Caco-2 (cell line): ENCODE measurements at regions of chr5 and their contacts with region 1.

Region 1: DNA sequence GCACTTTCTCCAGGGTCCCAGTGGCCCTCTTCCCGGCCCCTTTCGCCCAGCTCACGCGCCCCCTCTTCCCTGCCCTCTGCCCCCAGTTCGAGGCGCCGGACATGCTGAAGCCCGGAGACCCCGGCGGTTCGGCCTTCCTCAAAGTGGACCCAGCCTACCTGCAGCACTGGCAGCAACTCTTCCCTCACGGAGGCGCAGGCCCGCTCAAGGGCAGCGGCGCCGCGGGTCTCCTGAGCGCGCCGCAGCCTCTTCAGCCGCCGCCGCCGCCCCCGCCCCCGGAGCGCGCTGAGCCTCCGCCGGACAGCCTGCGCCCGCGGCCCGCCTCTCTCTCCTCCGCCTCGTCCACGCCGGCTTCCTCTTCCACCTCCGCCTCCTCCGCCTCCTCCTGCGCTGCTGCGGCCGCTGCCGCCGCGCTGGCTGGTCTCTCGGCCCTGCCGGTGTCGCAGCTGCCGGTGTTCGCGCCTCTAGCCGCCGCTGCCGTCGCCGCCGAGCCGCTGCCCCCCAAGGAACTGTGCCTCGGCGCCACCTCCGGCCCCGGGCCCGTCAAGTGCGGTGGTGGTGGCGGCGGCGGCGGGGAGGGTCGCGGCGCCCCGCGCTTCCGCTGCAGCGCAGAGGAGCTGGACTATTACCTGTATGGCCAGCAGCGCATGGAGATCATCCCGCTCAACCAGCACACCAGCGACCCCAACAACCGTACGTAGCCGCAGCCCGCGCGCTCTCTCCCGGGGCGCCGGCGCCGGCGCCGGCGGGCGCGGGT is 1.1 kb downstream of the PRDM6 start:
- DNase-seq: peak in 1 of 2 experiments; percentile 60
- H3K4me3 ChIP-seq: peak overlapping the region; percentile 61
- H3K4me3 Mint-ChIP-seq: peak overlapping the region; percentile 85
- H3K27ac Mint-ChIP-seq: no peak overlapping the region
- H3K4me1 ChIP-seq: 0 out of 2 replicates have a peak, but pooled peaks cover 3% of the 10 kb centered on the region
- H3K4me1 Mint-ChIP-seq: peaks cover 6% of the 10 kb centered on the region
- H3K27me3 ChIP-seq: no peaks in the 10 kb centered on the region; the same call in 1 of the 2 replicates
- H3K27me3 Mint-ChIP-seq: peaks cover 46% of the 10 kb centered on the region
- CTCF ChIP-seq: no peak

Region 2: DNA sequence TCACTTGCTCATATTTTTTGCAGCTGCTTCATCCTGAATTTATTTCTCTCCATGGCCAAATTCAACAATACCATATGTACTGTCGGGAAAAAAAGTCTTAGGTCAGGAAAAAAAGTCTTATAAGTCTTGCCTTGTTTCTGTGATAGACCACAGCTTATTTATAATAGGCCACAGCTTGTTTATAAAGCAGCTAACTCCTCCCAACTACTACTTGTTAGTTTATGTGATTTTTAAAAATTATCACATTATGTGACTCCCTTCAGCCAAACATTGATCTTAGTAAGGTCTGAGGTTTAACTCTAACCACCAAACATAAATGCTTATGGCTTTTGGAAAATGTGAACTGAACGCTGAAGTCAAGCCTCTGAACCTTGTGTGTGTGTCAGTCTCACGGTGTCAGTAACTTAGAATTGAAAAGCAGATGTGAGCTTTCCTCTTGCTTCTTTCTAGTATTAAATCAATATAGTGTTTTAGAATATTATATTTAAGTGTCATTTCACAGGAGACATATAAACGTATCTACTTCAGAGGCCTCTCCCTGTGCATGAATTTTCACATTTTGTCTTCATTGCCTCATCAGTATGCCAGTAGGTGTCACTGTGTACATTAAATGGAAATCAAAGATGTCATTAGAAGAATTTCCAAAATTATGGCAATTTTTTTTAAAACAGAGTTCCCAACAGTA is 193.4 kb before region 1 on chr5:
- CTCF ChIA-PET with region 1: no interaction called
- POLR2A ChIA-PET with region 1: no interaction called
- intact Hi-C with region 1: no loop called
- DNase-seq: peak in 1 of 2 experiments; percentile 20
- H3K4me3 ChIP-seq: no peak overlapping the region
- H3K4me3 Mint-ChIP-seq: no peak overlapping the region
- H3K27ac Mint-ChIP-seq: no peak overlapping the region
- H3K4me1 ChIP-seq: peaks cover 7% of the 10 kb centered on the region
- H3K4me1 Mint-ChIP-seq: peaks cover 6% of the 10 kb centered on the region
- H3K27me3 ChIP-seq: no peaks in the 10 kb centered on the region
- H3K27me3 Mint-ChIP-seq: no peaks in the 10 kb centered on the region
- CTCF ChIP-seq: peak; percentile 69 to 70

Region 3: GRCh38 chr5:123036391-123037103 is 53.5 kb before region 1 on chr5 and contains the start of gene PPIC:
- CTCF ChIA-PET with region 1: no interaction called
- POLR2A ChIA-PET with region 1: no interaction called
- intact Hi-C with region 1: loop called (anchors 5 kb)
- DNase-seq: peak; percentile 82 to 92
- H3K4me3 ChIP-seq: peak within 1 kb of the TSS; percentile 87
- H3K4me3 Mint-ChIP-seq: peak within 1 kb of the TSS; percentile 81
- H3K27ac Mint-ChIP-seq: peak within 1 kb of the TSS; percentile 2
- H3K4me1 ChIP-seq: peaks cover 7% of the 10 kb centered on the region; the same call in 1 of the 2 replicates
- H3K4me1 Mint-ChIP-seq: peaks cover 9% of the 10 kb centered on the region
- H3K27me3 ChIP-seq: no peaks in the 10 kb centered on the region
- H3K27me3 Mint-ChIP-seq: peaks cover 6% of the 10 kb centered on the region
- CTCF ChIP-seq: no peak
- total RNA-seq, gene PPIC: 46.7 and 50.6 TPM in 2 replicates

Region 4: DNA sequence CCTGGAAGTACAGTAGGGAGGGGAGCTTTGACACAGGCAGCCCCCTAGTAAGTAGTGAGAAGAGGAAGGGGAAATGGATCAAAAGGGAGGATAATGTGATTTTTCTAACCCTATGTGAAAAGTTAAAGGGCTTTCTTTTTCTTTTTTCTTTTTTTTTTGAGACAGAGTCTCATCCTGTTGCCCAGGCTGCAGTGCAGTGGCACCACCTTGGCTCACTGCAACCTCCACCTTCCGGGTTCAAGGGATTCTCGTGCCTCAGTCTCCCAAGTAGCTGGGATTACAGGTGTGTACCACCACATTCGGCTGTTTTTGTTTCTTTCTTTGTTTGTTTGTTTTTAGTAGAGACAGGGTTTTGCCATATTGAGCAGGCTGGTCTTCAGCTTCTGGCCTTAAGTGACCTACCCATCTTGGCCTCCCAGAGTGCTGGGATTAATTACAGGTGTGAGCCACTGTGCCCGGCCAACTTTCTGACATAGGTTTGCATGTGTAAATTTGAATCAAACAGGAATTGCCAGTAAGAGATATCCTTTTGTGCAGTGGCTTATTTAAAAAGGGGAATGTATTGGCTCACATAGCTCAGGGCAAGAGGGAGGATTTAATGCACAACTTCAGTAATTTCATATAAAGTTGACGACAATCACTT is 14.4 kb before region 1 on chr5:
- CTCF ChIA-PET with region 1: no interaction called
- POLR2A ChIA-PET with region 1: no interaction called
- intact Hi-C with region 1: no loop called
- DNase-seq: no peak
- H3K4me3 ChIP-seq: no peak overlapping the region
- H3K4me3 Mint-ChIP-seq: no peak overlapping the region
- H3K27ac Mint-ChIP-seq: no peak overlapping the region
- H3K4me1 ChIP-seq: no peaks in the 10 kb centered on the region
- H3K4me1 Mint-ChIP-seq: no peaks in the 10 kb centered on the region
- H3K27me3 ChIP-seq: no peaks in the 10 kb centered on the region
- H3K27me3 Mint-ChIP-seq: peaks cover 9% of the 10 kb centered on the region
- CTCF ChIP-seq: no peak

Region 5: DNA sequence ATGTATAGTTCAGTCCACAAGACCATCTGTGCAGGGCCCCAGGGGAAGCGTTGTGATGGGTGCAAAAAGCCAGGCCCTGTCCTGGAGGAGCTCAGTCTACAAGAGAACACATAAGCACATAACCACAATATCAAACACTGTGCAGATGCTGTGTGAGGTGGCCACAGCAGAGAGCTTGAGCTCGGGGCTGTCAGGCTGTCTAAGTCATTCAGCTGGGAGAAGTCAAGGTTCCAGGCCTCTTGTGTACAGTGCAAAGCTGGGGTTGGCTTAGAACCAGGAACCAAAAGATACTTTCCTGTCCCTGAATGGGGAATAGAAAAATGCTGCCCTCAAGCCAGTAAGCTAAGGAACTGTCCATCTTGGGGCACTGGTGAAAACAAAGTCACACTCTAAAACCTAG is 74.0 kb after region 1 on chr5:
- CTCF ChIA-PET with region 1: no interaction called
- POLR2A ChIA-PET with region 1: no interaction called
- intact Hi-C with region 1: no loop called
- DNase-seq: no peak
- H3K4me3 ChIP-seq: no peak overlapping the region
- H3K4me3 Mint-ChIP-seq: no peak overlapping the region
- H3K27ac Mint-ChIP-seq: no peak overlapping the region
- H3K4me1 ChIP-seq: no peaks in the 10 kb centered on the region
- H3K4me1 Mint-ChIP-seq: no peaks in the 10 kb centered on the region
- H3K27me3 ChIP-seq: no peaks in the 10 kb centered on the region
- H3K27me3 Mint-ChIP-seq: peaks cover 11% of the 10 kb centered on the region
- CTCF ChIP-seq: no peak

Region 6: DNA sequence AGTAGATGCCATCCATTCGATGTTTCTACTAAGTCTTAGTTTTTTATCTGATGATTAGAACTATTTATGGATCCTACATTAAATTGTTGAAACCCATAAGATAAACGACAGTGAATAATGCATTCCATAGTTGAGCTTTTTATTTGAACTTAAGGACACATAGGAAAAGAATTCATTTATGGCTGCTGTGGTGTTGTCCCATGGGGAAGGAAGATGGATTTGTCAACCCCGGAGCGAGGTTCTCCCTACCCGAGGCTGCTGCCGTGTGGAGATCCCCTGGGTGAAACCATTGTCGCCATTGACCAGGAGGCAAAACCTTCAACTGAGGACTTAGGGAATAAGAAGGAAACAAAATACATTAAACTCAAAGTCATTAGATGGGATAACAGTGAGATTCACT is 145.7 kb after region 1 on chr5:
- CTCF ChIA-PET with region 1: no interaction called
- POLR2A ChIA-PET with region 1: no interaction called
- intact Hi-C with region 1: no loop called
- DNase-seq: no peak
- H3K4me3 ChIP-seq: no peak overlapping the region
- H3K4me3 Mint-ChIP-seq: no peak overlapping the region
- H3K27ac Mint-ChIP-seq: no peak overlapping the region
- H3K4me1 ChIP-seq: no peaks in the 10 kb centered on the region
- H3K4me1 Mint-ChIP-seq: no peaks in the 10 kb centered on the region
- H3K27me3 ChIP-seq: no peaks in the 10 kb centered on the region
- H3K27me3 Mint-ChIP-seq: peaks cover 17% of the 10 kb centered on the region
- CTCF ChIP-seq: no peak